ENCODE measurements at regions of chr22 and their contacts with region 1.

Region 1: GRCh38 chr22:19854778-19855503 is at the starts of genes GNB1L and RTL10:
- DNase-seq: peak; percentile 96
- H3K4me3 Mint-ChIP-seq: peak within 1 kb of the TSS; percentile 95
- H3K27ac Mint-ChIP-seq: peak within 1 kb of the TSS; percentile 98
- H3K4me1 Mint-ChIP-seq: peaks cover 53% of the 10 kb centered on the region
- H3K27me3 Mint-ChIP-seq: no peaks in the 10 kb centered on the region
- total RNA-seq, gene GNB1L: 8.8 to 9.8 TPM
- total RNA-seq, gene RTL10: 10.9 to 11.9 TPM

Region 2: DNA sequence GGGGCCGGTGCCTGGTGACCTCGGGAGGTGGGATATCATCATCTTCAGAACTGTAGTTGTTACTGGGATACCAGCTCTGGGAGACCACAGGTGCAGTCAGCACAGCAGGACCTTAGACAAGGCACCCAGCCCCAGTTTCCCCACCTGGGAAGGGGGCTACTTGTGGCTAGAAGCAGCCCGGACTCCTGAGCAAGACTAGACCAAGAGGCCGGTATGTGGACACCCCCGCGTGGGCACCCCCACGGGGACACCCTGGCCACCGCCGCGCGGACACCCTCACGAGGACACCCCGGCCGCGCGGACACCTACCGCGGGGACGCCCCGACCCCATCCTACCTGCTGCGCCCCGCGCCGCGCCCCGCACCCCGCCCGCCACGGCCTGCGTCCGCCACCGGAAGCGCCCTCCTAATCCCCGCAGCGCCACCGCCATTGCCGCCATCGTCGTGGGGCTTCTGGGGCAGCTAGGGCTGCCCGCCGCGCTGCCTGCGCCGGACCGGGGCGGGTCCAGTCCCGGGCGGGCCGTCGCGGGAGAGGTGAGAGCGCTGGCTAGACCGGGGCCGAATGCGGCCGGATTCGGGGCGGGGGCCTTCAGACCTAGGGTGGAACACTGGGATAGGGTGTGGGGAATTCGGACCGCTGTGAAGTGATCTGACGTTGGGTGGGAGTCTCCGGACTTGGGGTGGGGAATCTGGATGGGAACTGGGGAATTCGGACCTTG is 86.6 kb after region 1 on chr22 and contains the starts of genes COMT and TXNRD2:
- CTCF ChIA-PET with region 1: no interaction called
- intact Hi-C with region 1: loop called (anchors 2 kb)
- DNase-seq: peak; percentile 77
- H3K4me3 Mint-ChIP-seq: peak within 1 kb of the TSS; percentile 96
- H3K27ac Mint-ChIP-seq: peak within 1 kb of the TSS; percentile 93
- H3K4me1 Mint-ChIP-seq: peaks cover 29% of the 10 kb centered on the region
- H3K27me3 Mint-ChIP-seq: no peaks in the 10 kb centered on the region
- total RNA-seq, gene COMT: 53.7 to 56.8 TPM
- total RNA-seq, gene TXNRD2: 22.9 to 23.6 TPM

Region 3: DNA sequence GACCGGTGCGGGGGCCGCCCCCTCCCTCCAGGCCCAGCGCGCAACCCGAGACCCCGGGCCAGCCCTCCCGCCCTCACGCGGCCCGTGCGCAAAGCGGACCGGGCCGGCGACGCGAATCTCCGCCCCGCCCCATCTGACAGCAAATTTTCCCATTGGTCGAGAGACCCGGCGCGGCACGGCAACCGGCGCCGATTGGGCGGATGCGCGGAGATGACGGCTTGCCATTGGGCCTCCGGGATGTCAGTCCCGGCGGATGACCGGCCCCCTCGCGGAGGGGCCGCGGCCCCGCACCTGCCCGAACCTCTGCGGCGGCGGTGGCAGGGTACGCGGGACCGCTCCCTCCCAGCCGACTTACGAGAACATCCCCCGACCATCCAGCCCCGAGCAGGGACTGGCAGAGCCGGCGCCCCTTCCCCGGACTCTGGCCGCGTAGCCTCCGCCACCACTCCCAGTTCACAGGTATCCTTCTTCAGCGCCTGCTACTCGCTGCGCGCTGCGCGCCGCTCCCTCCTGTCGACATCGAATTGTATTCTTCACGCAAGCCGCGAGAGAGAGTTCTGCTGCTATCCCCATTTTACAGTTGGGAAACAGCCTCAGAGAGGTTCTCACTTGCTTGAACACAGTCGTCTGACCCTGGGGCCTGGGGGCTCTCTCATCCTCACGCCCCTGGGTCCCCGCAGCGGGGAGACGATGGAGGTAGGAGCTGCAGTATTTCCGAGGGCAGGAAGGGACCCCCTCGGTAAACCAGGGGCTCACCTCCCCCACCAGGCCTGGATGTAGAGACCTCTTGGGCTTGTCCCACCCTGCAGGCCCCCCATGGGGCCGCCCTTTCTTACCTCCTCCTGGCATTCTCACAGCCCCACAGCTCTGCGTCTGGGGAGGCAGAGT is 162.0 kb after region 1 on chr22 and contains the start of gene ARVCF:
- CTCF ChIA-PET with region 1: no interaction called
- intact Hi-C with region 1: loop called (anchors 2 kb)
- DNase-seq: peak; percentile 90
- H3K4me3 Mint-ChIP-seq: peak within 1 kb of the TSS; percentile 84
- H3K27ac Mint-ChIP-seq: no peak within 1 kb of the TSS
- H3K4me1 Mint-ChIP-seq: peaks cover 17% of the 10 kb centered on the region
- H3K27me3 Mint-ChIP-seq: peaks cover 11% of the 10 kb centered on the region
- total RNA-seq, gene ARVCF: 2.0 to 2.6 TPM

Region 4: DNA sequence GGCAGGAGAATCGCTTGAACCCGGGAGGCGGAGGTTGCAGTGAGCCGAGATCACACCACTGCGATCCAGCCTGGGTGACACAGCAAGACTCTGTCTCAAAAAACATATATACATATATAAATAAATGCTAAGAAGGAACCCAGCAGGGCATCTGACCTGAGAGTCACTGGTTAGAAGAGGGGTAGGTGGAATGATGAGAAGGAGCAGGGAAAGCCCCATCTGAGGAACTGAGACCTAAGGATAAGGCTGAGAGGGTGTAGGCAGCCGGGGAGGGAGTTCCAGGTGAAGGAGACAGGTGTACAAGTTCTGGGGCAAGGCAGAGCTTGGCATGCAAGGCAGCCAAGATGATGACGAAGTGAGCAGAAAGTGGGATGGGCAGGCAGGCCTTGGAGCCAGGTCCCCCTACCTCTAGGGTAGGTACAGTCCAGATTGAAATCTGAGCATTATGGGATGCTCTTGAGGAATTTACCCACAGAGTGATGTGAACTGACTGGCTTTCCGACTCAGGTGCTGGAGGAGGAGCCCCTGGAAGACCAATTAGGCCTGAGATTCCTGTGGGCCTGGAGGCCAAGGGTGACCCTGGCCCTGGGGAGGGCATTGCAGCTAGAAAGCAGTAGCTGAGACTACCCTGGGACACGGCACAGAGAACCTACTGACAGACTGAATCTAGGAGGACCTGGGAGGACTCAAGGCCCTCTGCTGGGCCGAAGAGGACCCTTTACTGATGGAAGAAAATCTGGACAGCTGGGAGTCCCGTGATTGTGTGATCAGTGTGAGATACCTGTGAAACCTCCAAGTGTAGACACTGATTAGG is 617.9 kb after region 1 on chr22:
- CTCF ChIA-PET with region 1: no interaction called
- intact Hi-C with region 1: no loop called
- DNase-seq: no peak
- H3K4me3 Mint-ChIP-seq: no peak overlapping the region
- H3K27ac Mint-ChIP-seq: no peak overlapping the region
- H3K4me1 Mint-ChIP-seq: peaks cover 47% of the 10 kb centered on the region
- H3K27me3 Mint-ChIP-seq: no peaks in the 10 kb centered on the region

Measured in activated naive CD4-positive, alpha-beta T cell treated with anti-CD3 and anti-CD28 coated beads for 36 hours (primary cell).